WTC11 (cell line): ENCODE measurements at regions of chr3 and their contacts with region 1.

Region 1: GRCh38 chr3:179768080-179768479 is 115.2 kb downstream of the USP13 start:
- DNase-seq: peak; percentile 53
- ATAC-seq: peak; percentile 84
- H3K4me3 Mint-ChIP-seq: no peak overlapping the region
- H3K27ac Mint-ChIP-seq: 0 out of 2 replicates have a peak overlapping the region, but pooled peaks have one; percentile 21
- H3K4me1 Mint-ChIP-seq: peaks cover 28% of the 10 kb centered on the region
- H3K27me3 Mint-ChIP-seq: no peaks in the 10 kb centered on the region
- CTCF ChIP-seq: peak; percentile 53

Region 2: GRCh38 chr3:179546814-179547635 is 221.1 kb before region 1 on chr3:
- CTCF ChIA-PET with region 1: no interaction called
- POLR2A ChIA-PET with region 1: no interaction called
- DNase-seq: no peak
- ATAC-seq: peak; percentile 72
- H3K4me3 Mint-ChIP-seq: no peak overlapping the region
- H3K27ac Mint-ChIP-seq: peak overlapping the region; percentile 19
- H3K4me1 Mint-ChIP-seq: peaks cover 8% of the 10 kb centered on the region
- H3K27me3 Mint-ChIP-seq: no peaks in the 10 kb centered on the region
- CTCF ChIP-seq: no peak

Region 3: DNA sequence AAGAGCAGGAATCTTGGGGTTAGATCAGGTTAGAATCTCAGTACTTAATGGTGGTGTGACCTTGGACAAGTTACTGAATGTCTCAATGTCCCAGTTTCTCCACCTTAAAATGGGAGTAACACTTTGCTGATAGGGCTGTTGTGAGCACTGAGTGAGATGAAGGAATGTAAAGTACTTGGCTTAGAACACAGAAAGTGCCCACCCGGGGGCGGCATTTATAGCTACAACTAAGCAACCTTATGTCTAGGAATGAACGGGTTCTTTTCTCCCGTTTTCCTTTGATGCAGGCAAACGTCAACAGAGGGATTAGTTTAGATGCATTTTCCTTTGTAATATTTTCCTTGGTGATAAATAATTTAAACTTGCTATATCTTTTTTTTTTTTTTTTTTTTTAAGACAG is 61.3 kb after region 1 on chr3:
- CTCF ChIA-PET with region 1: interaction called, 11 read pairs
- POLR2A ChIA-PET with region 1: no interaction called
- DNase-seq: peak; percentile 29
- ATAC-seq: peak; percentile 76
- H3K4me3 Mint-ChIP-seq: no peak overlapping the region
- H3K27ac Mint-ChIP-seq: no peak overlapping the region
- H3K4me1 Mint-ChIP-seq: peaks cover 32% of the 10 kb centered on the region
- H3K27me3 Mint-ChIP-seq: no peaks in the 10 kb centered on the region
- CTCF ChIP-seq: no peak